ENCODE measurements at regions of chr17 and their contacts with region 1.

Region 1: GRCh38 chr17:49227436-49228261 is 2.9 kb downstream of the PHOSPHO1 start:
- DNase-seq: peak; percentile 70 to 74 (median 72)
- ATAC-seq: peak; percentile 56 to 69 (median 62)
- H3K4me3 ChIP-seq: no peak overlapping the region
- H3K27ac ChIP-seq: no peak overlapping the region
- H3K4me1 ChIP-seq: peaks cover 0 to 14% (median 0%) of the 10 kb centered on the region in 4 donors
- H3K27me3 ChIP-seq: no peaks in the 10 kb centered on the region
- CTCF ChIP-seq: peak; percentile 69 to 94 (median 81)
- POLR2A ChIP-seq: no peak

Region 2: GRCh38 chr17:49013311-49014213 is 214.1 kb before region 1 on chr17:
- intact Hi-C with region 1: no loop called
- DNase-seq: no peak
- ATAC-seq: peak in 2 of 4 donors; percentile 31 to 51
- H3K4me3 ChIP-seq: peak overlapping the region in 1 of 3 donors; percentile 11
- H3K27ac ChIP-seq: no peak overlapping the region
- H3K4me1 ChIP-seq: peaks cover 0 to 8% (median 0%) of the 10 kb centered on the region in 4 donors
- H3K27me3 ChIP-seq: peaks cover 0 to 26% of the 10 kb centered on the region in 2 donors
- CTCF ChIP-seq: no peak
- POLR2A ChIP-seq: no peak

Region 3: GRCh38 chr17:49180303-49180702 is 47.3 kb before region 1 on chr17:
- intact Hi-C with region 1: loop called in 1 of 2 experiments (anchors 5 kb)
- DNase-seq: peak; percentile 52 to 70 (median 62)
- ATAC-seq: peak; percentile 83 to 91 (median 88)
- H3K4me3 ChIP-seq: no peak overlapping the region
- H3K27ac ChIP-seq: no peak overlapping the region
- H3K4me1 ChIP-seq: no peaks in the 10 kb centered on the region
- H3K27me3 ChIP-seq: no peaks in the 10 kb centered on the region
- CTCF ChIP-seq: peak; percentile 71 to 87 (median 77)
- POLR2A ChIP-seq: no peak

Region 4: DNA sequence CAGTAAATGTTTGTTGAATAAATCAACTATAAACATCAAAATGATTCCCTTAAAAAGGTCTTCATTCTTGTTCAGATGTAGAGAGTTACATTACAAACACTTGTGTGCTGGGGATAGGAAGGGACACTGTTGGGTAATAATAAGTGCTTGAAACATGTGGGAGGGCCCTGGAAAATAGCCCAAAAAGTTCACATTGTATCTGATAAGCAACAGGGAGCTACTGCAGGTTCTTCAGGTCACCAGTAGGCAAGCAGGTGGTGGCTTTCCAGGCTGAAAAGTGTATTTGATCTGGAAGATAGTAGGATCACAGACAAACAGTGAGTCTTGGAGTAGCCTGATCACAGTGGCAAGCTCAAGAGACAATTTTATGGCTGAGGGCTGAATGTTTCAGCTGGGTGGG is 153.4 kb after region 1 on chr17:
- intact Hi-C with region 1: no loop called
- DNase-seq: peak in 2 of 3 donors; percentile 37 to 84
- ATAC-seq: peak; percentile 82 to 96 (median 93)
- H3K4me3 ChIP-seq: no peak overlapping the region
- H3K27ac ChIP-seq: peak overlapping the region in 1 of 3 donors; percentile 48
- H3K4me1 ChIP-seq: peaks cover 0 to 22% (median 0%) of the 10 kb centered on the region in 4 donors
- H3K27me3 ChIP-seq: no peaks in the 10 kb centered on the region
- CTCF ChIP-seq: no peak
- POLR2A ChIP-seq: no peak

Region 5: DNA sequence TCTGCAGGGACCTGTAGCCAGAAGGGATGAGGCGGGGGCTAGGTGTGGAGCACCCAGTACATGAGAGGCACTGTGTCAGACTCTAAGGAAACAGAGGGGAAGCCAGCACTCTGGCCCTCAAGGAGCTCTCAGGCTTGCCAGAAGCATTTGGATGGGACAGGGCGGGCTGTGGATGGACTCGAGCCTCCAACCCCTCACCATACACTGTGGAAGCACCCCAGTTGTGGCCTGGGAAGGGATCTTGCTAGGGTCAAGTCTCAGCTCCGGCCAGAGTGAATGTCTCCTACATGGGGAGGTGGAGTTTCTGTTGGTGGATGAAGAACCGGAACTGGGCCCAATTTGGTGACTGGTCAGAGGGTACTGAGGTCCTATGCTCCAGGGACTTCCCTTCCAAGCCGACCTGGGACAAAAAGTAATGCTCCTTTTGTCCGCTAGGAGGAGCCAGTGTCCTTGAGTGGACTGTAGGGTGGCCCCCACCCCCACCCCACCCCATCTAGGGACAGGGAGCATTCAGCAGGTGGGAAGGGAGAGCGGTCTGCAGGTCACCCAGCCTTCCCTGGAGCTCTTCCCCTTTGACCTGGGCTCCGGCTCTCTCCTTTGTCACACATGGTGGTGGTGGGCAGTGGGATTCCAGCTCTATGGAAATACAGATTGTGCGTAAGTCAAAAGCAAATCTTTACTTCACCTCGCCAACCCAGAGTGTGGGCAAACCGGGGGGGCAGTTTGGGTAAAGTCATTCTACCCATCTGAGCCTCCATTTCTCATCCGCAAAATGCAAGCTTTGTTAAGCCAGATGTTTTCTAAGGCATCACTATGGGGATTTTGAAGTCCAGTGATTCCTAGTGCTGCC is 207.4 kb after region 1 on chr17:
- intact Hi-C with region 1: no loop called
- DNase-seq: no peak
- ATAC-seq: peak; percentile 41 to 67 (median 51)
- H3K4me3 ChIP-seq: no peak overlapping the region
- H3K27ac ChIP-seq: no peak overlapping the region
- H3K4me1 ChIP-seq: peaks cover 0 to 9% (median 0%) of the 10 kb centered on the region in 4 donors
- H3K27me3 ChIP-seq: no peaks in the 10 kb centered on the region
- CTCF ChIP-seq: peak in 3 of 4 donors; percentile 58 to 63 (median 59)
- POLR2A ChIP-seq: no peak